Activated CD8-positive, alpha-beta memory T cell treated with anti-CD3 and anti-CD28 coated beads, Interleukin-2, amount 10 ng/mL, durations not matched to agents 7 days and 5 days (primary cell): ENCODE measurements at regions of chr19 and their contacts with region 1.

Region 1: GRCh38 chr19:43784981-43785808 is 4.4 kb upstream of the KCNN4 start:
- DNase-seq: peak; percentile 76
- ATAC-seq: peak; percentile 46
- H3K4me3 Mint-ChIP-seq: peak overlapping the region; percentile 25
- H3K27ac Mint-ChIP-seq: peak overlapping the region; percentile 87
- H3K4me1 Mint-ChIP-seq: peaks cover 41% of the 10 kb centered on the region
- H3K27me3 Mint-ChIP-seq: peaks cover 7% of the 10 kb centered on the region

Region 2: DNA sequence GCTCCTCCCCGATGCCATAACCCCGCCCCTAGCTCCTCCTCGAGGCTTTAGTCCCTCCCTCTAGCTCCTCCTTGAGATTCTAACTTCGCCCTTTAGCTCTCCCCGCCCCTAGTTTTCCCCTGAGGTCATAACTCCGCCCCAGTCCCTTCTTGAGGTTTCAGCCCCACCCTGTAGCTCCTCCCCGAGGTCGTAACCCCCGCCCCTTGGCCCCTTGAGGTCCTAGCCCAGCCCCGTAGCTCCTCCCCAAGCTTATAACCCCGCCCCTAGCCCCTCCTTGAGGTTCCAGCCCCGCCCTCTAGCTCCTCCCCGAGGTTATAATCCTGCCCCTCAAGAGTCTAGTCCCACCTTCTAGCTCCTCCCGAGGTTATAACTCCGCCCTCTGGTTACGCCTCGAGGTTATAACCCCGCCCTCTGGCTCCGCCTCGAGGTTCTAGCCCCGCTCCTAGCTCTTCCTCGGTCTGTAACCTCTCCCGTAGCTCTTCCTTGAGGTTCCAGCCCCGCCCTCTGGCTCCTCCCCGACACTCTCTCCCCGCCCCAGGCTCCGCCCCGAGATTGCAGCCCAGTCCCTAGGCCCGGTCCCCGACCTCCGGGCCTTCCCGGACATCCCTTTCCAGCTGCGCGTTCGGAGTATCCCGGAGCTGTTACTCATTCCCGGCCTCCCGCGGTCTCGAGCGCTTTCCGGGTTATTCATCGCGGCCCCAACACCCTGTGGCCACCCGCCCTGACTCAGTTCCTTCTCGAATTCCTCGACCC is 116.6 kb before region 1 on chr19:
- CTCF ChIA-PET with region 1: interaction called, 12 read pairs
- DNase-seq: peak; percentile 99
- ATAC-seq: peak; percentile 91
- H3K4me3 Mint-ChIP-seq: peak overlapping the region; percentile 82
- H3K27ac Mint-ChIP-seq: peak overlapping the region; percentile 85
- H3K4me1 Mint-ChIP-seq: peaks cover 38% of the 10 kb centered on the region
- H3K27me3 Mint-ChIP-seq: peaks cover 12% of the 10 kb centered on the region

Region 3: GRCh38 chr19:43754503-43755255 is 30.5 kb before region 1 on chr19 and contains the start of gene SMG9:
- CTCF ChIA-PET with region 1: interaction called, 56 read pairs
- DNase-seq: peak; percentile 98
- ATAC-seq: peak; percentile 87
- H3K4me3 Mint-ChIP-seq: peak within 1 kb of the TSS; percentile 89
- H3K27ac Mint-ChIP-seq: peak within 1 kb of the TSS; percentile 98
- H3K4me1 Mint-ChIP-seq: peaks cover 65% of the 10 kb centered on the region
- H3K27me3 Mint-ChIP-seq: no peaks in the 10 kb centered on the region
- total RNA-seq, gene SMG9: 62.3 to 74.7 TPM

Region 4: DNA sequence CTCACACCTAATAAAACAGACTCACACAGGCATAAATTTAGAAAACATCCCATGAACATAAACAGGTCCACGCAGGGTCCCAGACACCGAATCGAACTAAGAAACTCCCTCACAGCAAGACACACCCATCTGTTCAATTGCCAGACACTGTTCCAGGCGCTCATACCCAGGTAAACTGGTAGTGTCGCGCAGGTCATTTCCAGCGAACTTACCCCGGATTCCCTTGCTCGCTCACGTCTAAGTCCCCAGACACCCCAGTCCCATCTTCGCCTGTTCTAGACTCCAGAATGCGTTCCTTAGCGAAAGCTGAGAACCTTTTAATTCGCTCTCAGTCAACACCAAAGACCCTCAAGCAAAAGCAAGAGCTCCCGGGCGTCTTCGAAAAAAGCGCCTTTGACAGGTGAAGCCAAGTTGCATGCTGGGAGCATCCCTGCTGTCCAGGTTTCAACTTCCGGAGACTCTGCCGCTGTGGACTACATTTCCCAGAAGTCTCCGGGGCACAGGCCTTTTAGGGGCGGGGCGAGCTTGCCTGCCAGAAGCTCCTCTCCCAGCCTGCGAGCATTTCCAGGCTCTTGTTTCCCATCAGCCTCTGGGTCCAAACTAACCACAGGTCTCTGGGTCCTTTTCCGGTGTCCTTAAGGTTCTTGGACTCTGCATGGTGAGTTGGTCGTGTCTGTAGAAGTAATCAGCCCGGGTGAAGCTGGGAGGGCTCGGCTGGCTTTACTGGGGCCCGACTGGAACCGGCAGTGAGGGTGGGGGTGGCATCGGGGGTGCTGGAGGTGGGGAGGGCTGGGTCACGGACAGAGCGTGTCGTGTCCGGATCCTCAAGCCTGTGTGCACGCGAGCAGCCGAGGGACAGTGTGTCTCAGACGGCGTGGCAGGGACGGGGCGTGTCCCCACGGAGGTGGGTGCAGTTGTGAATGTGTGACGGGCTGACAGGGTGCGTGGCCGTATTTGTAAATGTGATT is 41.9 kb after region 1 on chr19 and contains the start of gene ZNF283:
- CTCF ChIA-PET with region 1: no interaction called
- DNase-seq: peak; percentile 90
- ATAC-seq: peak; percentile 96
- H3K4me3 Mint-ChIP-seq: peak within 1 kb of the TSS; percentile 85
- H3K27ac Mint-ChIP-seq: peak within 1 kb of the TSS; percentile 68
- H3K4me1 Mint-ChIP-seq: peaks cover 19% of the 10 kb centered on the region
- H3K27me3 Mint-ChIP-seq: peaks cover 12% of the 10 kb centered on the region
- total RNA-seq, gene ZNF283: 5.2 to 6.5 TPM